ENCODE measurements at regions of chr20 and their contacts with region 1.

Region 1: DNA sequence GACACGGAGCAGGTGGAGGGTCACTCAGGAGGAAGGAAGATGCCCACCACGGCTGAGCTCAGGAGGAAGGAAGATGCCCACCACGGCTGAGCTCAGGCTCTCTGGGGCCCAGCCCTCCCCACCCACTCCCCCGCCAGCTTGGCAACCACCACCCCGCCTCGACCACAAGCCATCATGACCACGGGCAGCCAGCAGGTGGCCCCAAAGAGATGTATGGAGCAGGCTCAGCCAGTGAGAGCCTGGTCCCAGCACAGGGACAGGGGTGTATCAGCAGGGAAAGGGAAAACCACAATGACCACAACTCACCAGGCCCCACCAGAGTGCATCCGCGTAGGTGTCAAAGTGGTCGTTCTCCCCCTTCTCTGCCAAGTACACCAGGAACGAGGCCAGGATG is 30.4 kb downstream of the KCNQ2 start:
- DNase-seq: peak; percentile 69 to 85 (median 82)
- ATAC-seq: peak; percentile 32 to 46
- H3K4me3 ChIP-seq: no peak overlapping the region
- H3K27ac ChIP-seq: no peak overlapping the region
- H3K4me1 ChIP-seq: no peaks in the 10 kb centered on the region
- H3K27me3 ChIP-seq: no peaks in the 10 kb centered on the region

Region 2: DNA sequence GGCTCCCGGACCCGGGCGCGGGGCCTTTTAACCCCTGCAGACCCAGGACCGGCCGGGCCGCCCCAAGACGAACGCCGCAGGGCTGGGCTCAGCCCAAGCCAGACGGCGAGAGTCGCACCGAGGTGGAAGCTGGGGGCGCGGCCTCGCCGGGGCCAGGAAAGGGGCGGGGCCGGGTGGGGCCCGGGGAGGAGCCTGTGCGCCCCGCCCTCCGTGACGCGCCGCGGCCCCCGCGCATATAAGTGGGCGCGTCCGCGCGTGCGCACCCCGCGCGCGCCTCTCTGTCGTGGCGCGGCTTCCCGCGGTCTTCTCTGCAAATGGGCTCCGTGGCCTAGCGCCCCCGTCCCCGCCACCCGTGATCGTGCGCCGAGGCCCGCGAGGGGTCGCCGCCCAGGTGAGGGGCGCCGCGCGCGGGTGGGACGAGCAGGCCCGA is 78.4 kb after region 1 on chr20 and contains the start of gene PPDPF:
- intact Hi-C with region 1: loop called in 1 of 4 experiments (anchors 5 kb)
- DNase-seq: peak; percentile 83 to 96 (median 94)
- ATAC-seq: peak; percentile 89 to 90
- H3K4me3 ChIP-seq: peak within 1 kb of the TSS; percentile 80
- H3K27ac ChIP-seq: peak within 1 kb of the TSS; percentile 73
- H3K4me1 ChIP-seq: peaks cover 5% of the 10 kb centered on the region
- H3K27me3 ChIP-seq: no peaks in the 10 kb centered on the region
- total RNA-seq, gene PPDPF: 143 to 244 (median 223) TPM

Region 3: GRCh38 chr20:63553227-63553932 is 111.3 kb after region 1 on chr20:
- intact Hi-C with region 1: no loop called
- DNase-seq: peak; percentile 90 to 96 (median 91)
- ATAC-seq: peak; percentile 82 to 83
- H3K4me3 ChIP-seq: peak overlapping the region; percentile 55
- H3K27ac ChIP-seq: no peak overlapping the region
- H3K4me1 ChIP-seq: no peaks in the 10 kb centered on the region
- H3K27me3 ChIP-seq: no peaks in the 10 kb centered on the region

Measured in right cardiac atrium (tissue), 5 donors.